BJ (cell line): ENCODE measurements at regions of chr10 and their contacts with region 1.

Region 1: DNA sequence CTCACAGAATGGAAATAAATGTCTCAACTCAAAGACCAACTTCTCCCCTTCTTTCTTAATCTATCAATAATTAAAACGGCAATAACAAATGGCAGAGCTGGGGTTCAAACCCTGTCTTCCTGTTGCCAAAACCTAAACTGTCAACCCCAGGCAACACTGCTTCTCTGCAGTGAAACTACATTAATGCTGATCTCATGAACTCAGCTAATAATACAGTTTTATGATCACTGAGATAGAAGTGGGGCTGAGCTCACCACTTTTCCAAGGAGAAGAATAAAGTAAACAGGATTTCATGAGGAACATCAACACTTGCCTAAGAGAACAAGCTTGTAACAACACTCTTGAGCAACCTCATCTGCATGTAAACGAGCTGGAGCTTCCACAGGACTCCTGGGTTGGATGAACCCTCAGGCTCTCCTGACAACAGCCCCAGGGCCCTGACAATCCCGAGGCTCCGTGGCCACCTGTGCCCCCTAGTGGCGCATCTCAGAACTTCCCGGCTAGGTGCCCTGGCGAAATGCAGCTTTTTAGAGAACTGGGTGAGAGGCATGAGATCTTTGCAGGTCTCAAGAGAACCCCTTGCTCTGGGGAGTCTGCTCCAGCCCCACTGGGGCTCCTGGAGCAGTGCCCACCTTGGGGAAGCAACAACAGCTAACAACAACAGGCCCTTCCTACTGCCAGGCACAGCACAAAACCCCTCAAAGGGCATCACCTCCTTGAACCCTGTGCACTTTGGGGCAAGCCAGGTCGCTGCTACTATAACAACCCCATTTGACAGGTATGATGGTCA is 169.3 kb downstream of the SH3PXD2A start:
- DNase-seq: no peak
- H3K4me3 ChIP-seq: no peak overlapping the region
- H3K27me3 ChIP-seq: no peaks in the 10 kb centered on the region
- CTCF ChIP-seq: peak; percentile 97

Region 2: GRCh38 chr10:103592186-103593021 is 93.7 kb before region 1 on chr10:
- CTCF ChIA-PET with region 1: interaction called, 39 read pairs
- POLR2A ChIA-PET with region 1: no interaction called
- DNase-seq: no peak
- H3K4me3 ChIP-seq: no peak overlapping the region
- H3K27me3 ChIP-seq: no peaks in the 10 kb centered on the region
- CTCF ChIP-seq: peak; percentile 76

Region 3: DNA sequence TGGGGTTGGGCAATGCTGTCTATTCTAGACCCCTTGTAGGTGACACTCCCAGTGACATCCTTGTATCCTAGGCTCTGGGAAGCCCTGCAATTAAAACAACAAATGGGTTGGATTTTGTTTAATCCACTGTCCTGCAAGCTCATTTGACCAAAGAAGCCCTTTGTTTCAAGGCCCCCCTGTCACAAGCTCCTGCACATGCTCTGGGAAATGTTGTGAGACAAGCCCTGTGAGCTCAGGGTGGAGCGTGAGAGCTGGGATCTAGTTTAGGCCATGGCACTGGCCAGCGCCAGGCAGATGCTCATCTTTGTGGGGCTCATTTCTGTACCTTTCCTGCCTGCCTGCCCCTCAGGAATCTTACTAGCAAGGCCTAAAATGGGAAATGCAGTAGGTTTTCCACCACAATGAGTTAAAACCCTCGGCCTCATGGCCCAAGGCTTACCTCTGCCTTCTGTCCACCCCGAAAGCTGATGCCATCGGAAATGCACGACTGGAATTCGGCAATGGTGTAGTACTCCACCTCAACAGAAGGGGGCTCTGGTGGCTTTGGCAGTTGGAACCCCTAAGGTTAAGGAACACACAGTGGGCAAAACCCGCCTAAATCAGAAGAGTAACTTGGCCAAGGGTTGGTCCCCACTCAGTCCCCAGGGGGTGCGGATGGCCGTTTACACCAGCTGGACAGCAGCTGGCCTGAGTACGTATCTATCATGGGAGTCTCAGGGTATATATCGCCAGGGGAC is 80.5 kb before region 1 on chr10:
- CTCF ChIA-PET with region 1: interaction called, 98 read pairs
- POLR2A ChIA-PET with region 1: no interaction called
- DNase-seq: no peak
- H3K4me3 ChIP-seq: no peak overlapping the region
- H3K27me3 ChIP-seq: no peaks in the 10 kb centered on the region
- CTCF ChIP-seq: peak; percentile 90

Region 4: DNA sequence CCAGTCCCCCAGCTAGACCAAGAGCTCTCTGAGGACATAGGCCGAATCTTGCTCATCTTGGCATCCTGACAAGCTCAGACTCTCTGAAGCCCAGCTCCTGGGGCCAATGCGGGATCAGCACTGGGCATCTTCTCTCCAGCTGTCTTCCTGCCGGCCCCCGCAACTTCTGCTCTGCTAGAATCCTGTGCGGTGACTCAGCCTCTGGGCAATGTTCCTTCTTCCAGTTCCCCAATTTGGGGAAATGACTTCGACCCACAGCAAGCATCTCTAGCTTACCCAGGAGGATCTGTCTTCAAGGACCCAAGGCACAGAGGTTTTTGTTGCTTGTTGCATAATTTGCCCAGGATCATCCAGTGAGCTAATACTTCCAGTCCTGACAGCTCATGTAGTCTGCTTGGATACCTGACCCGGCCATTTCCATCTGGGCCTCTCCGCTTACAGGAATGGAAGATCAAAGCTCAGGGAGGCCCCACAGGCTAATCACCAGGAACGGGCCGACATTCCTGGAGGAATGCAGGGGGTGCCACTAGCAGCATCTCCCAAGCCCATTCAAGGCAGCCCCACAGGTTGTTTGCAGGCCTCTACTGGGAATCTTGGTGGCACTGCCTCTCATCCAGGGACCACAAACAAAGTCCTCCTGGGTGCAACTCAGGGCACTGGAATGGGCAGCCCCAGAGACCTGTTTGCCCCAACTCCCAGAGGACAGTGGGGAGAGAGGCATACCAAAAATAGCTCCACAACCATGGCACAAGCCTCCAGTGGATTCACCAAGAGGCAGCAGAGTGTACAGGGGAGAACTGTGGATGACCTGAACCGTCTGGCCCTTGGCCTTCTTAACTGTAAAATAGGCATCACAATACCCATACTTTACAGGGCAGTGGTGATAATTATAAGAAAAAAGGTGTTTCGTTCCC is 40.7 kb before region 1 on chr10:
- CTCF ChIA-PET with region 1: interaction called, 25 read pairs
- POLR2A ChIA-PET with region 1: no interaction called
- DNase-seq: peak; percentile 95
- H3K4me3 ChIP-seq: no peak overlapping the region
- H3K27me3 ChIP-seq: no peaks in the 10 kb centered on the region
- CTCF ChIP-seq: no peak

Region 5: GRCh38 chr10:103666087-103666761 is 19.9 kb before region 1 on chr10:
- CTCF ChIA-PET with region 1: interaction called, 24 read pairs
- POLR2A ChIA-PET with region 1: no interaction called
- DNase-seq: no peak
- H3K4me3 ChIP-seq: no peak overlapping the region
- H3K27me3 ChIP-seq: no peaks in the 10 kb centered on the region
- CTCF ChIP-seq: peak; percentile 54

Region 6: DNA sequence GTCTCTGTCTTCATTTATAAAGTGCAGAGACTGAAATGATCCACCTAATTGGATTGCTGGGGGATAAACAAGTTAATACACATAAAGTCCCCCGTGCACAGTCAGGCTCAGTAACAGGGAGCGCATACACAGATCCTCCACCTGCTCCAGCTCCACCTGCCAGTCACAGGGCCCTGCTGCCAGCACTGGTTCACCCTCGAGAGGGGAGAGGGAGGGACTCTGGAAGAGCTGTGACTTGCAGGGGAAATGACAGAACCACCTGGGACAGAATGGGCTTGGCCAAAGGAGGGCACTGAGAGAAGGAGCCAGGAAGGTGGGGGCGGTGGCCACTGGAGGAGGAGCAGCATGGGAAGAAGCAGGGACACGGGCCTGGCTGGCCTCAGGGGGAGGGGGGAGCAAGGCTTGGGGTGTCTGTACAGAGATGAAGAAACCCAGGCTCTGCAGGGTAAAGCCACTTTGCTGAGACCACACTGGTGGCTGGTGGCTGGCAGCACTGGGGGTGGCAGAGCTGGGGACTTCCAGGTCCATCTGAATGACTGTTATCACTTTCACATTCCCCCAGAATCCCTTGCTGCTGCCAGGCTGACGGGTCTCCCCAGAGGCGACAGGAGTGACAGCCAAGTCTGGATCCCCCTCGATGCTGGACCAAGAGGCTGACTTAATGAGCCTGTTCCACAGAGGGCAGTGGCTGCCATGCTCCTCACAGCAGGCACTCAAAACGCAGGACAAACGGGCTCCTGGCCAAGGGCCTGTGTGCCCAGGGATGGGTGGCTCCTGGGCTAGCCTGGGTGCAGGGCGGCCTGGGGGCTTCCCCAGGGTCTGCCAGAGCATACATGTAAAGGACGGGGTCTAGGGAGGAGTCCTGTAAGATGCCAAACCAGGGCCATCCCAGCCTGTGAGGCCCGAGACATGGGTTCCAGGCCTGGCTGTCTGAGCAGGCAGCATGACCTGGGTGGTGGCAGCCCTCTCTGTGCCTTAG is 18.2 kb after region 1 on chr10:
- CTCF ChIA-PET with region 1: interaction called, 13 read pairs
- POLR2A ChIA-PET with region 1: no interaction called
- DNase-seq: no peak
- H3K4me3 ChIP-seq: no peak overlapping the region
- H3K27me3 ChIP-seq: no peaks in the 10 kb centered on the region
- CTCF ChIP-seq: no peak

Region 7: DNA sequence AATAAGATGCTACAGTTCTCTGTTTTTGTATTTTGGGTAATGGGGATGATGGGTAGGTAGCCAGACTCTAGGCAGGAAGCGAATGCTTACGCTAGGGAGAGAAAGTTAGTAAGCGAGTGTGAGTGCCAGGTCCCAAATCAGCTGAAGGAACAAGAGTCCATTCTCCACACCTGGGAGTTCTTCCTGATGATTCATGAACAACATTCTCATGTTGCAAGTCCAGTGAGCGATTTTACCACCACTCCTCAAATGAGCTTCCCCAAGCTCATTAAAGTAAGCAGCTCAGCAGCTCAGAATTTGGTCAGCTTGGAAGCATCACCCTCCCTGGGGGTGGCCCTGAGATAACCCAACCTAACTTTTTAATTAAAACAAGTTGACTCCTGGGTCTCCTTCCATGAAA is 142.0 kb after region 1 on chr10:
- CTCF ChIA-PET with region 1: no interaction called
- POLR2A ChIA-PET with region 1: no interaction called
- DNase-seq: no peak
- H3K4me3 ChIP-seq: no peak overlapping the region
- H3K27me3 ChIP-seq: no peaks in the 10 kb centered on the region
- CTCF ChIP-seq: no peak